ENCODE measurements at regions of chr2 and their contacts with region 1.

Region 1: DNA sequence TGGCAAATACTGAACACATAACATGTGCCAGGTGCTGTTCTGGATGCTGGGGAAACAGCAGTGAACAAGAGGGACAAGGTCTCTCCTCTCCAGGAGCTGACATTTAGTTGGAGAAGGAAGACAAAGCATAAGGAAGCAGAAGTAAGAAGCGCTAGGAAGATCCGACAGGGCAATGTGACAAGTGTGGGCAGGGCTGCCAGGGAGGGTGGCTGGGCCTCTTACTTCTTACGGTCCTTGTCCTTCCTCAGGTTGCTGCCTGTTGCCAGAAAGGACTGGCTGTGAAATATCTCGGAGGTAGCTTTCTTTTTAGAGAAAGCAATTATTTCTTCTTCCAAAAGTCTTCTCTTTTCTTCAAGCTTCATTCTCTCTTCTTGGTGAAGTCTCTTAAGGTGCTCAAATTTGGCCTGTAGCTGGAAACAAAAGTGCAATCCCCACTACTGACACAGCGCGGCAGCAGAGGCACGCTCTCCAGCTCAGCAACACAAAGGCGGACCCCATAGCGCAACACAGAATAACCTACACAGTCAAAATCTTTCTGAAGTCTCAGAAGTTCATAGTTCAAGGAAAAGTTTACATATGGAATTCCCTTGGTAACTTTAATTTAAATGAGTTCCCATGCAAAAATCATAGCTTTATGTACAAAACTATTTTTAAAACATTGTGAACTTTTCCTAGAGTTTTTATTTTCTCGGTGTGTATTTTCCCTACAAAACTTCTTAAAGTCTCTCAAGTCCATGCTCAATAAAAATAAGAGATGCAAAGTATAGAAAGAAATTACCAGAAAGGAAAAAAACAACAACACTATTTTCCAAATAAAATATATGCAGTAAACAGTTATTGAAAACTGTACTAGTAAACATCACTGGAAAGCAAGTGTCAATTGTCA is 67.7 kb downstream of the SEPTIN10 start:
- DNase-seq: peak; percentile 61
- ATAC-seq: peak; percentile 68
- H3K4me3 Mint-ChIP-seq: no peak overlapping the region
- H3K27ac Mint-ChIP-seq: no peak overlapping the region
- H3K4me1 Mint-ChIP-seq: no peaks in the 10 kb centered on the region
- H3K27me3 Mint-ChIP-seq: peaks cover 30% of the 10 kb centered on the region

Region 2: DNA sequence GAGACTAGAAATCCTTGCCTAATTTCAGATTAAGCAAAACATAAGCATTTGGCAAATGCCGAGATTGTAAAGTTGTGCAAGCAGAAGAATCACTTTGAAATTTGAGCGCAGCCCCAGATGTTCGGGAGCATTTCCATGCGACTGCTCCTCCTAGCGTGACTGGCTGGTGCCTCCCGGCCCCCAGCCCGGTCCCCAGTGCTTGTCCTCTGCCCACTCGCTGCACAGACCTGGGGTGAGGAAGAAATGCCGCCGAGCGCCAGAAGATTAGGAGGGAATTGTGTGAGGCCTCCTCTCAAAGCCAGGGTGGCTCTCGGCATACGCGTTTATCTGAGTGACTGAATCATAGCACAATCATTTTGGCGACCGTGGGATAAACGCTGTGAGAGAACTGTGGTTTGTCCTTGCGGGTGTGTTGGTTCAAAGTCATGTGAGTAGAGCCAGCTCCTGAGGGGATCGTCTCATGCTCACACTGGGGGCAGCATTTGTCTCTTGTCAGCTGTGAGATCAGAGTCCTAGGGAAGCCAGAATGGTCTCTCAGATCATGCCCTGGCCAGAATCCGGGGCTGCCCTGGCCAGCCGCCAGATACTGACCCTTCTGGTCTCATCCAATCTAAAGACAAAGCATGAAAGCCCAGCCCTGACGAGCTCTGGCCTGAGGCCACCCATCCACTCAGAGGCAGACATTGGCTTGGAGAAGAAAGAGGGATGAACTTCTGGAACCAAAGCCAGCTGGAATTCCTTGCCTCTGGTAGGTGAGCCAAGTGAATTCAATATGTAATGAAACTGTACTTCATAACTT is 227.7 kb before region 1 on chr2:
- CTCF ChIA-PET with region 1: no interaction called
- DNase-seq: no peak
- ATAC-seq: no peak
- H3K4me3 Mint-ChIP-seq: no peak overlapping the region
- H3K27ac Mint-ChIP-seq: no peak overlapping the region
- H3K4me1 Mint-ChIP-seq: peaks cover 6% of the 10 kb centered on the region
- H3K27me3 Mint-ChIP-seq: peaks cover 59% of the 10 kb centered on the region

Region 3: DNA sequence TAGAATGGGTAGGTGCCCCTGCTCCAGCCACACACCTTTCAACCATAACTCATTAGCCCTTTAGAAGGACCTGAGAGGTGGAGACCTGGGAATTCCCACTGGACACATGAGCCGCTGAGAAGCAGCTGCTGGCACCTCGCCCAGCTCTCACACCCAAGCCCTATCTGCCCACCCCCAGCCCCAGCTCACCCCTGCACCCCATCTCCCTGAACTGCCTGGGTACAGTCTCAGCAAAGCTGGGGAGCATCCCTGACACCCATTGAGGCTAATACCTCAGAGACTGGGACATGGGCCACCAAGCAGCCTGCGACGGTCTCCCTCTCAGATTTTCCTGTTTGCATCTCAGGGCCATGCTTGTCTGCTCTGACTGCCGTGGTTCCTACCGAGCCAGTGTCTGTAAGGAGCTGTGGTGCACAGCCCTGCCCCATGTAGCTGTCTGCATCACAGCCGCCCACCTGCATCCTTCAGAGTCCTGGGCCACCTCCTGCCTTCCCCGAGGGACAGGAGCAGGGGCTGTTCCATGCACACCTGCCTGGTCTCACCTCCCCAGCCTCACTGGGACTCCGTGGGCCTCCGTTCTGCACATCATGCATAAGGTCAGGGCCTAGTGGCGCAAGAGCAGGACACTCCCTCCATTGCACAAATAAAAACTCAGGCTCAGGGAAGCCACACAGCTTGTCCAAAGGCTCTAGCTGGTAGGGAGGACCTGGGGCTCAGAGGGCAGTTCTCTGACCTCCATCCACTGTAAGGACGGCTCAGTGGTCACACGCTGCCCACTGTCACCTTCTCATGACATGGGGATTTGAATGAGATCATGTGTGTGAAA is 22.3 kb before region 1 on chr2:
- CTCF ChIA-PET with region 1: no interaction called
- DNase-seq: no peak
- ATAC-seq: no peak
- H3K4me3 Mint-ChIP-seq: no peak overlapping the region
- H3K27ac Mint-ChIP-seq: no peak overlapping the region
- H3K4me1 Mint-ChIP-seq: no peaks in the 10 kb centered on the region
- H3K27me3 Mint-ChIP-seq: peaks cover 4% of the 10 kb centered on the region

Region 4: GRCh38 chr2:109676346-109676902 is 130.4 kb after region 1 on chr2:
- CTCF ChIA-PET with region 1: no interaction called
- DNase-seq: no peak
- ATAC-seq: no peak
- H3K4me3 Mint-ChIP-seq: no peak overlapping the region
- H3K27ac Mint-ChIP-seq: no peak overlapping the region
- H3K4me1 Mint-ChIP-seq: no peaks in the 10 kb centered on the region
- H3K27me3 Mint-ChIP-seq: peaks cover 13% of the 10 kb centered on the region

Region 5: DNA sequence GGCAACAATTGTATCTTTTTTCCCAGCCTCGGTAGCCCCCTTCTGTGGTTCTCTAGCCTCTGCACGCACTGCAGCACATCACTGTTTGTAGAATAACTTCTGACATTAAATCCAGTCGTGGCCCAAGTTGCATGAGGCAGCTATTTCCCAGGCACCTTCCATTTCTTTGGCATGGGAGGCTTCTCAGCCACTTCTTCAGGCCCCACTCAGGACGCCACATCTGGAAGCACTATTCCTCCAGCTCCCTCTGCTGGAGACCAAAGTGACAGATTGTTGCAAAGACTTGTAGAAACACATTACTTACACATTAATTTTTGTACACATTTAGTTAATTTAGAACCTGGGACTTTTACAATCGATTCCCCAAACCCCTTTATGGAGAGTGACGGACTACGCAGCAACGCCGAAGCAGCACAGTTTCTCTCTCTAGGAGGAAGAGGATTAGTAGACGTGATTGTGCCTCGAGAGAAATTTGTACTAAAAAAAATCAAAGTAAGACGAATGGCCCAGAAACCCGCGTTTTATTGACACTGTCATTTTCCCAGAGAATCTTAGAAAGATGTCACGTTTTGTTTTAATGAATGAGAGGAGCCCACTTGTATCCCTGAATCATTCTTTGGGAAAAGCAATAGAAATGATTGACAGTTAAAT is 190.2 kb after region 1 on chr2:
- CTCF ChIA-PET with region 1: interaction called, 11 read pairs
- DNase-seq: no peak
- ATAC-seq: no peak
- H3K4me3 Mint-ChIP-seq: no peak overlapping the region
- H3K27ac Mint-ChIP-seq: no peak overlapping the region
- H3K4me1 Mint-ChIP-seq: no peaks in the 10 kb centered on the region
- H3K27me3 Mint-ChIP-seq: peaks cover 18% of the 10 kb centered on the region